ENCODE measurements at regions of chrX and their contacts with region 1.

Region 1: GRCh38 chrX:74388998-74389722 is 32.1 kb upstream of the SLC16A2 start:
- DNase-seq: no peak
- ATAC-seq: no peak
- H3K4me3 ChIP-seq: no peak overlapping the region
- H3K27ac ChIP-seq: no peak overlapping the region
- H3K4me1 ChIP-seq: no peaks in the 10 kb centered on the region
- H3K27me3 ChIP-seq: peaks cover 0 to 30% (median 0%) of the 10 kb centered on the region in 4 donors
- CTCF ChIP-seq: no peak

Region 2: DNA sequence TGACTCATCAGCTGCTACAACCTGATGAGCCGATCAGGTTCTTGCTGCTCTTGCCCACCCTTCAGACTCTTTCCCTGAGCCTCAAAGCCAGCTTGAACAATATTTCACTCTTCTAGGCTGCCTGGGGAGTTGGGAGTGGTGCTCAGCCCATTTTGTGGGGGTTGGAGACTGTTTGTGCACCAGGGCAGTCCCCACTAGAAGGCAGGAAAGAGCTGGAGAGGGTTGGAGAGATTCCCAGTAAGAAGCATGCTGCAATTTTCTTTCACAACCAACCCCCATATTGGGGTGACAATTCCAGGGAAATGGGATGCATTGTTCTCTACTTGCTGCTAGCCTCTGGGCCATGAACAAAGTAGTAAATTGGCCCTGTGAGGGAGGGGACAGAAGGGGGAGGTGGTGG is 76.3 kb after region 1 on chrX:
- intact Hi-C with region 1: no loop called
- DNase-seq: no peak
- ATAC-seq: no peak
- H3K4me3 ChIP-seq: no peak overlapping the region
- H3K27ac ChIP-seq: no peak overlapping the region
- H3K4me1 ChIP-seq: no peaks in the 10 kb centered on the region
- H3K27me3 ChIP-seq: no peaks in the 10 kb centered on the region
- CTCF ChIP-seq: no peak

Region 3: GRCh38 chrX:74545880-74546523 is 156.8 kb after region 1 on chrX:
- intact Hi-C with region 1: loop called in 2 of 3 experiments (anchors 5 to 10 kb)
- DNase-seq: no peak
- ATAC-seq: no peak
- H3K4me3 ChIP-seq: no peak overlapping the region
- H3K27ac ChIP-seq: no peak overlapping the region
- H3K4me1 ChIP-seq: no peaks in the 10 kb centered on the region
- H3K27me3 ChIP-seq: peaks cover 0 to 3% (median 0%) of the 10 kb centered on the region in 4 donors
- CTCF ChIP-seq: no peak

Region 4: GRCh38 chrX:74781507-74782034 is 392.4 kb after region 1 on chrX:
- intact Hi-C with region 1: no loop called
- DNase-seq: no peak
- ATAC-seq: no peak
- H3K4me3 ChIP-seq: no peak overlapping the region
- H3K27ac ChIP-seq: no peak overlapping the region
- H3K4me1 ChIP-seq: no peaks in the 10 kb centered on the region
- H3K27me3 ChIP-seq: no peaks in the 10 kb centered on the region
- CTCF ChIP-seq: no peak

Measured in pancreas (tissue), 10 donors.